ENCODE measurements at regions of chr14 and their contacts with region 1.

Region 1: GRCh38 chr14:66507722-66508546 is at the start of gene GPHN:
- DNase-seq: peak; percentile 89
- ATAC-seq: peak; percentile 97
- H3K4me3 Mint-ChIP-seq: peak within 1 kb of the TSS; percentile 98
- H3K27ac Mint-ChIP-seq: peak within 1 kb of the TSS; percentile 94
- H3K4me1 Mint-ChIP-seq: peaks cover 24% of the 10 kb centered on the region
- H3K27me3 Mint-ChIP-seq: peaks cover 11% of the 10 kb centered on the region
- total RNA-seq, gene GPHN: 16.0 to 17.6 TPM

Region 2: GRCh38 chr14:66459603-66460002 is 48.3 kb before region 1 on chr14:
- POLR2A ChIA-PET with region 1: no interaction called
- DNase-seq: no peak
- ATAC-seq: no peak
- H3K4me3 Mint-ChIP-seq: no peak overlapping the region
- H3K27ac Mint-ChIP-seq: no peak overlapping the region
- H3K4me1 Mint-ChIP-seq: no peaks in the 10 kb centered on the region
- H3K27me3 Mint-ChIP-seq: no peaks in the 10 kb centered on the region

Region 3: GRCh38 chr14:66483322-66483721 is 24.6 kb before region 1 on chr14:
- POLR2A ChIA-PET with region 1: no interaction called
- DNase-seq: no peak
- ATAC-seq: no peak
- H3K4me3 Mint-ChIP-seq: no peak overlapping the region
- H3K27ac Mint-ChIP-seq: no peak overlapping the region
- H3K4me1 Mint-ChIP-seq: peaks cover 5% of the 10 kb centered on the region
- H3K27me3 Mint-ChIP-seq: no peaks in the 10 kb centered on the region

Region 4: DNA sequence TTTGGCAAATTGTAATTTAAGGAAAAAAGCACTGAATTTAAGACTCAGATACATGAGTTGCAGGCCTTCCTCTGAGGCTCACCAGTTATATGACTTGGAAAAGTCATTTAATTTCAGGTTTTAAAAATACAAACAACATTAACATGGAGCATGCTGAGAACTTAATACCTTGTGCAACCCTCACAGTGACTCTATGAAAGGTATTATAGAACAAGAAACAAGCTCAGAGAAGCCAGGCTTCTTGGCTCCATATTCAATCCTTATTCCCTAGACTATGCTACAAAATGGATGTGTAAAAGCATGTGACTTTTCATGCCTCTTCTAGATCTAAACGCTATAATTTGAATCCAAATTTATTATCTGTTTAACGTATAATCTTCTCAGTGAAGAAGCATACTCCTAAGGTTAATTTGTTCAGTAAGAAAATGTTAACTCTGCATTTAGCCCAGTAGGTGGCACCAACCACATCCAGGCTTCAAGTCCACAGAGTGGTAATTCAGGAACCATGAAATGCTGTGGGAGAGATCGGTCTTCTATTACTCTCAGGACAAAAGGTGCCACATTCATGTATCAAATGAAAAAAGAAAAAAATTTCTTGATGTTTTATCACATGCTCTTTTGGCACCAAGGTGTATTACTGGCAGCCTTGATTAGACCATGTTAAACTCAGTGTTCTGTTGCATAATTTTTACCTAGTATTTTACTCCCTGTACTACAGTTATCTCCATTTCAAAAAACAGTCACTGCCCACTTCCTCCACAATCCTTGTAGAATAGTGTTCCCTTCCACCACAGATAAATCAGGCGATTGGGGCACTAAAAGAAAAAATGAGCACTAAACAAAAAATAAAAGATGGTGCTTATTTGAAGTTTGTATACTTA is 12.5 kb before region 1 on chr14:
- POLR2A ChIA-PET with region 1: interaction called, 16 read pairs
- DNase-seq: no peak
- ATAC-seq: peak; percentile 83
- H3K4me3 Mint-ChIP-seq: no peak overlapping the region
- H3K27ac Mint-ChIP-seq: no peak overlapping the region
- H3K4me1 Mint-ChIP-seq: peaks cover 20% of the 10 kb centered on the region
- H3K27me3 Mint-ChIP-seq: peaks cover 2% of the 10 kb centered on the region